Right ventricle myocardium inferior (tissue), 1 donor: ENCODE measurements at regions of chr5 and their contacts with region 1.

Region 1: DNA sequence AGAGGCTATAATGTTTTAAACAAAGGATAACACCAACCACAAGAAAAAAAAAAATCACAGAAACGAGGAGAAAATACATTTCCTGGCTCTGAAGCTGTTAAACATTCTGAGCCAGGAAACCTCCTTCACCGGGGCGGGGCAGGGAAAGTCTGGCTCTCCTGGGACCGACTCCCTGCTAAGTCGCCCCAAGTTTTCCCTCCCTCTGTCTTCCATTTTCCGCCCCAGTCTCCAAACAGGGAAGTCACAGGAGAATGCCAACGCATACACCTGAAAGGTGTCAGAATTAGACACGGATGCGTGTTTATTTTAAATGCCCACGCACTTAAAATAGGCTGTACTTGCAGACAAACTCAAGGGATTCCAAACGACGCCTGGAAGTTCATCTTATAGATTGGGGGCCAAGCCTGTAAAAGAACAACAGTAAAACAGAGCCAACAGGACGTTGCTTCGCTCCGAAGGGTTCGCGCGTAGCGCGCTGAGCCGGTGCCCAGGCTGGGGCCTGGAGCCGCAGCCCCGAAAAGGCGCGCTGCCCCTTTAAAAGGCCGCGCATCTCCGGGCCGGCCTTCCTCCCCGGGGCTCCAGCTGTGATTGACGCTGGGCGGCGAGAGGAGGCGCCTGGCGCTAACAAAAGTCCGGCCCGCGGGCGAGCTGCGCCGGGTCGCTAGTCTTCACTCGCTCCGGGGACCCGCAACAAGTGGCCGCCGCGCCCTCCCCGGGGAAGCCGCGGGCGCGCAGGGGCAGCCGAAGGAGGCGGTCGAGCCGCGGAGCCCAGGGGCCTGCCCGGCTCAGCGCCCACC is at the start of gene FBXL7:
- DNase-seq: peak; percentile 91
- ATAC-seq: peak; percentile 89
- total RNA-seq, gene FBXL7: 17.8 TPM

Region 2: GRCh38 chr5:15794052-15794985 is 294.6 kb after region 1 on chr5:
- intact Hi-C with region 1: loop called (anchors 10 kb)
- DNase-seq: no peak
- ATAC-seq: no peak